Dendritic cell treated with granulocyte-macrophage colony-stimulating factor and Interleukin-4, amounts not matched to agents 40 ng/mL and 50 ng/mL, for 4 days (primary cell): ENCODE measurements at regions of chr1 and their contacts with region 1.

Region 1: DNA sequence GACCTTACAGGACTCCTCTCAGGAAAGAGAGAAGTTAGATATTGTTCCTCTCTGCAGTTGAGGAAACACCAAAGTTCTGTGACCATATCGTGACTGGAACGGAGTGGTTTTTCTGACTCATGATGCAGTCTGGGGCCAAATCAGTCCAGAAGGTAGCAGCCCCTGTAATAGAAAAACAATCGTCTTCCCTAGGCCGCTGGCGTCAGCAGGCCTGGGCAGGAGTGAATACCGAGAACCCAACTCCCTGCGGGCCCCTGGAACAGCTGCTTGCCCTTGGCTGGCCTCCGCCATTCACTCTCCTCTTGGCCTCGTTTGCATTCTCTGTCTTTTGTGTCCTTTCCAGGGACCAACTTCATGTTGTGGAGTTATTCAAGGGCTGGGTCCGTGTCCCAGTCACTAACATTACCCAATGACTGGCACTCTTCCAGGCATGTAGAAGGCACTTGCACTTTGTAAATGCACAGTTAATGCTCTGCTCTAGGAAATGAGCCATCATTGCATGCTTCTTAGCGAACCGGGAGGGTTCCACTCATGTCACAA is 10.9 kb upstream of the CD101 start:
- H3K4me3 Mint-ChIP-seq: no peak overlapping the region
- H3K27ac Mint-ChIP-seq: peak overlapping the region; percentile 85
- H3K4me1 Mint-ChIP-seq: peaks cover 81% of the 10 kb centered on the region
- H3K27me3 Mint-ChIP-seq: peaks cover 8% of the 10 kb centered on the region

Region 2: GRCh38 chr1:117003323-117003811 is 12.7 kb after region 1 on chr1:
- intact Hi-C with region 1: loop called (anchors 1 kb)
- H3K4me3 Mint-ChIP-seq: peak overlapping the region; percentile 30
- H3K27ac Mint-ChIP-seq: peak overlapping the region; percentile 81
- H3K4me1 Mint-ChIP-seq: peaks cover 78% of the 10 kb centered on the region
- H3K27me3 Mint-ChIP-seq: no peaks in the 10 kb centered on the region

Region 3: GRCh38 chr1:117225967-117226366 is 235.3 kb after region 1 on chr1:
- intact Hi-C with region 1: no loop called
- H3K4me3 Mint-ChIP-seq: no peak overlapping the region
- H3K27ac Mint-ChIP-seq: no peak overlapping the region
- H3K4me1 Mint-ChIP-seq: no peaks in the 10 kb centered on the region
- H3K27me3 Mint-ChIP-seq: no peaks in the 10 kb centered on the region